Activated naive CD4-positive, alpha-beta T cell treated with anti-CD3 and anti-CD28 coated beads for 36 hours (primary cell): ENCODE measurements at regions of chr3 and their contacts with region 1.

Region 1: DNA sequence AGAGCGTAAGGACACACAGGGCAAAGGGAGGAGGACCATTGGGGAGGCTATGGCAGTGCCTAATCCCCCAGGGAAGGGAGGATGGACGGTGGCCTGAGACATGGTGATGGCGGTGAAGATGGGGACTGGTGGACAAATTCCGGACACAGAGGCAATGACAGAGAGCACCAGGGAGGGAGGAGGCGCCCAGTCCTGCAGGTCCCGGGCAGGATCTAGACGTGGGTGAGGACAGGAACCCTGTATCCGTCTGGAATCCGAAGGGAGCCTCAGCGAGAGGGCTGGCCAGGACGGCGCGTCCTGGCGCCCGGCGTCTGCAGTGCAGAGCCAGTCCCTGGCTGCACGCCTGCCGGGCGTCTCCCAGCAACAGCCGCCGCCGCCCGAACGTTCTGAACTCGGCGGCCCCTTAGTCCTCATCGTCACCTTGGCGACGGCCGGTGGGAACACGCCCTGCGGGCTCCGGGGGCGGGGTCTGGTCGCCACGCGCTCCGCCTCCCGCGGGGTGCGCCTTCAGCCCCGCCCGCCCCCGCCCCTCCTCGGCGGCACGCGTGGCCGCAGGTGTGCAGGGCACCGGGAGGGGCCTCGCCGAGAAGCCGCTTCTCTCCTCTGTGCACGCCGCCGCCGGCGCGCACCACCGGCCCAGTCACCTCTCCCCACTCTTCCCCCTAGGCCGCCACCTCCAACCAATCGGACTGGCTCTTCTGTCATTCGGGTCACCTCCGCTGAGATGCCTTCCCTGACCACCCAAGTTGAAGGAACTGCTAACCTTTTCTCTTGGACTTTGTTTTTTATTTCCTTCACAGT is 11.6 kb downstream of the XIRP1 start:
- DNase-seq: peak; percentile 89
- H3K4me3 Mint-ChIP-seq: peak overlapping the region; percentile 85
- H3K27ac Mint-ChIP-seq: peak overlapping the region; percentile 92
- H3K4me1 Mint-ChIP-seq: peaks cover 46% of the 10 kb centered on the region
- H3K27me3 Mint-ChIP-seq: no peaks in the 10 kb centered on the region

Region 2: DNA sequence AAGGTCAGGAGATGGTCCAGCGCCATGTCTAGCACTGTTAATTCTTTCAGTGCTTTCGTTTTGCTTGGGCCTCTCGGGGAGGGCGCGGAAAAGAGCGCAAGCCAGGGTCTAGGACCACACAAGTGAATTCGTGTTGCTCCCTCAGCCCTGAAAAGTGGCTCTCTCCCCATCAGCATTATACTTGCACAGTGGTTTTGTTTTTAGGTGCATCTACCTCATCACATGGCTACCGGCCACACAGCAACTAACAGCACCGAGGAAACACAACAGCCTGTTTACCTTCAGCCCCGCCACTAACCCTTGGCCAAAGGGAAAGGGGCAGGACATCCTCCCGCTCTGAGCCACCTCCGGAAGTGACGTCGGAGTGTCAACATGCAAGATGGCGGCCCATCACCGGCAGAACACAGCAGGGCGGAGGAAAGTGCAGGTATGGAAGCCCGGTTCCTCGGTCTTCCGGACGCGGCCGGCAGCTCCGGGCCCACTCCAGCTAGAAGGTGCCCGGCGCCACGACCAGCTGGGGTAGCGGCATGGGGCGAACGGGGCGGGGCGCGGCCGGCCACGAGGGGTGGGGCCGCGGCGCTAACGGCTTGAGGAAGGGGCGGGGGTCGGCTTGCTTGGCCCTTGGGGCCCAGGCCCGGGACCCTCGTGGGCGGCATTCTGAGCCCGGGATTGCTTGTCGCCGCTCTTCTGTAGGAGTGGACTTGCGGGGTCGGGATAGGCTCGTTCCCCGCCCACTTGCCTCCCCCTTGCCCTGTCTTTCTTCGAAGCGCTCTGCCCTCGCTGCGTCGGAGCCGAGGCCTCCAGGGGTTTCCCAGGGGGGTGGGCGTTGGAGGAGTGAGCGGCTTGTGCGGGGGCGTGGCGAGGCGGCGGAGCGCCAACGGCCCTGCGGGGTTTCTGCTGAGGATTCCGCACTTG is 128.8 kb before region 1 on chr3 and contains the starts of genes SCN11A and WDR48:
- CTCF ChIA-PET with region 1: no interaction called
- intact Hi-C with region 1: loop called (anchors 1 kb)
- DNase-seq: peak; percentile 97
- H3K4me3 Mint-ChIP-seq: peak within 1 kb of the TSS; percentile 96
- H3K27ac Mint-ChIP-seq: peak within 1 kb of the TSS; percentile 98
- H3K4me1 Mint-ChIP-seq: peaks cover 50% of the 10 kb centered on the region
- H3K27me3 Mint-ChIP-seq: no peaks in the 10 kb centered on the region
- total RNA-seq, gene SCN11A: 0.05 TPM
- total RNA-seq, gene WDR48: 32.3 to 32.9 TPM

Region 3: GRCh38 chr3:39101022-39101689 is 79.6 kb before region 1 on chr3:
- CTCF ChIA-PET with region 1: interaction called, 5 read pairs
- intact Hi-C with region 1: loop called (anchors 1 kb)
- DNase-seq: peak; percentile 63
- H3K4me3 Mint-ChIP-seq: no peak overlapping the region
- H3K27ac Mint-ChIP-seq: no peak overlapping the region
- H3K4me1 Mint-ChIP-seq: peaks cover 28% of the 10 kb centered on the region
- H3K27me3 Mint-ChIP-seq: no peaks in the 10 kb centered on the region

Region 4: DNA sequence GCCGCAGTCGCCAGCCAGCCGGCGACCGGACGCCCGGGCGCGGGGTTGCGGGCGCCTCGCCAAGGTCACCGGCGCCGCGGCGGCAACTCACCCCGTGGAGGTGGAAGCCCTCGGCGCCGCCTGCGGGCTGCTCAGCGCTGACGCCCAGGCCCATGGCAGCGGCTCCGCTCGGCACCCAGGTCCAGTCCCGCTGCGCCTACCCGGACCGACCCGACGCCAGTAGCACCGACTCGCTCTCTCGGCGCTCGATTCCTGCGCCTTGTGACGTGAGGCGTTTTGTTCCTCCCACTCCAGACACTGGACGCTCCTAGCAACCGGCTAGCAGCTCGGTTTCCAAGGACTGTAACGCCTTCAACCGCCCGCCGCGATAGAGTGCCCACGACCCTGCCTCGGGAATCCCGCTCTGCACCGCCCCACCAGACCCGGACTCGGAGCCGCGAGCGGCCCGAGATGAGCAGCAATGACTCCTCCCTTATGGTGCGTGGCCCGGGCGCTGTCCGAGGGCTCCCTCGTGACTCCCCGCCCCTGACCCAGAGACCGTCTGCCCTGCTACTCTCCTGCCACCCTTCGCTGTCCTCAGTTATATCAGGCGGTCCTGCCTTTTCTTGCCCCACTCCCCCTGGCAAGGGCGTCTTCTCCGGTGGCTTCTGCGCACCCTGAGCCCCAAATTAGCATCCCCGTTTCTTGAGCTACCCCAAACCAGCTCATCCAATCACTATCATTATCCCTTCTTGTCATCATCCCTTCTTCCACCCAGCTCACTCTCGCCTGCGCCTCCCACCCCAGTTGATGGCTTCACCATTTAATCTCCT is 73.2 kb before region 1 on chr3 and contains the starts of genes GORASP1 and TTC21A:
- CTCF ChIA-PET with region 1: interaction called, 5 read pairs
- intact Hi-C with region 1: loop called (anchors 1 kb)
- DNase-seq: peak; percentile 79
- H3K4me3 Mint-ChIP-seq: peak within 1 kb of the TSS; percentile 83
- H3K27ac Mint-ChIP-seq: peak within 1 kb of the TSS; percentile 57
- H3K4me1 Mint-ChIP-seq: peaks cover 42% of the 10 kb centered on the region
- H3K27me3 Mint-ChIP-seq: no peaks in the 10 kb centered on the region
- total RNA-seq, gene GORASP1: 19.0 to 21.8 TPM
- total RNA-seq, gene TTC21A: 1.5 to 1.6 TPM

Region 5: DNA sequence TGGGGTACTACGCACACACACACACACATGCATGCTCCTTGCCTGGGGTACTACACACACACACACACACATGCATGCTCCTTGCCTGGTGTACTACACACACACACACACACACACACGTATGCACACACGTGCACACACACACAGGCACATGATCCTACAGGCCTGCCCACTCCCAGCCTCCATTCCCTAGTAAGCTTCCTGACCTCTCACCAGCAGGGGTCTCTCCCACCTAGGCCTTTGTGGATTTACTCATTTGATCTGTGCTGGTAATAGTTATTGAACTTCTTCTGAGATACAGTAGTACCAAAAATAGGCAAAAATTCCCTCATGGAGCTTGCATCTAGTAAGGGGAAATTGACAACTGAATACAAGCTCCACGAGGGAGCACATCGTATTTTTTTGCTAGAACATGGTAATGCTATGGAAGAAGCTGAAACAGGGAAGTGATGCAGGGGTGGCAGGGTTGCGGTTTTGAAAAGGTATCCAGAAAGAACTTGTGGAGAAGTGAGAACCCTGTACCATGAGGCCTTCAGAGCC is 54.1 kb before region 1 on chr3:
- CTCF ChIA-PET with region 1: interaction called, 7 read pairs
- intact Hi-C with region 1: loop called (anchors 1 kb)
- DNase-seq: peak; percentile 80
- H3K4me3 Mint-ChIP-seq: no peak overlapping the region
- H3K27ac Mint-ChIP-seq: no peak overlapping the region
- H3K4me1 Mint-ChIP-seq: peaks cover 18% of the 10 kb centered on the region
- H3K27me3 Mint-ChIP-seq: no peaks in the 10 kb centered on the region

Region 6: DNA sequence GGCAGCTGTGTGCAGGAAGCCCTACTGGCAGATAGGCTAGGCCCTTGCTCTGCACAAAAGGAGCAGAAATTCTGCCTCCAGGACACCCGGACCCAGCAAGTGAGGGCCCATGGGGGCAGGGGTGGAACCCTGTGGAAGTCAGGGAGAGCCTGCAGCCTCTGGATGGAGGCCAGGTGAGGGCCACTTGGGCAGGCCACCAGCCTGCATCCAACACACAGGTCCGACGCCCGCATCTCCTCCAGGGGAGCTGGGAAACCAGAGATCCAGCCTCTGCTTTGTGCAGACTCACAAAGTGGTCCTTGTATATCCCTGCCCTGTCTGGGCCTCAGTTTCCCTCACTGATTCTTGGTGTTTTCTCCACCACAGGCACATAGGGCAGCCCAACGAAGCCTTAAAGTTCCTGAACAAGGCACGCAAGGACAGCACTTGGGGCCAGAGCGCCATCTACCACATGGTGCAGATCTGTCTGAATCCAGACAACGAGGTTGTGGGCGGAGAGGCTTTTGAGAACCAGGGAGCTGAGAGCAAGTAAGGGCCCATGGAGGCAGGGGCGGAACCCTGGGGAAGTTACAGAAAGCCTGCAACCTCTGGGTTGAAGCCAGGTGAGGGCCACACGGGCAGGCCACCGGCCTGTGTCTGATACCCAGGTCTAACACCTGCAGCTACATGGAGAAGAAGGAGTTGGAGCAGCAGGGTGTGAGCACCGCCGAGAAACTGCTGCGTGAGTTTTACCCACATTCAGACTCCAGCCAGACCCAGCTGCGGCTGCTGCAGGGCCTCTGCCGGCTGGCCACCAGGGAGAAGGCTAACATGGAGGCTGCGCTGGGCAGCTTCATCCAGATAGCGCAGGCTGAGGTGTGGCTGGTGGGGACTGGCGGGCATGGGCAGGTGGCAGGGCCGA is 44.0 kb before region 1 on chr3:
- CTCF ChIA-PET with region 1: no interaction called
- intact Hi-C with region 1: no loop called
- DNase-seq: no peak
- H3K4me3 Mint-ChIP-seq: no peak overlapping the region
- H3K27ac Mint-ChIP-seq: no peak overlapping the region
- H3K4me1 Mint-ChIP-seq: peaks cover 20% of the 10 kb centered on the region
- H3K27me3 Mint-ChIP-seq: no peaks in the 10 kb centered on the region

Region 7: DNA sequence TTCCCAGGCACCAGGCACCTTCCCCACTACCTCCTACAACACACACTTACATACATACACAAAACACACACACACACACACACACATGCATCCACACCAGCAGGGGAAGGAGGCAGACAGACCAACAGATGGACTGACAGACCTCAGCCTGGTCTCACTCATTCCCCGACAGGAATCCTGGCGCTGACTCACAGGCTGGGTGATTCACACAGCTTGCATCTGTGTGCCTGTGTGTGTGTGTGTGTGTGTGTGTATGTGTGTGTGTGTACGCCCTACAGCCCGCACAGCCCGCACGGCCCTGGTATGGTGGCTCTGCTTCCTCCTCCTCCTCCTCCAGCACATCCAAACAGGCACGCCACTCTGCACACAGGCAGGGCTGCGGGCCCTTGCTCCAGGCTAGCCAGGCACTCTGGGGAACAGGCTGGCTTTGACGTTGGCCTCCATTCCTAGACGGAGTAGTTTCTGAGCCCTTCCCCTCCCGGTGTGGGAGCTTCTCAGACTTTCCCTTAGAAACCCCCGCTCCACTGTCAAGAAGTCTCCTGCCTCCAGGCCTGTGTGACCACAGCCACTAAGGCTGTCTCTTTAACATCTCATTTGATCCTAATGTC is 33.7 kb before region 1 on chr3:
- CTCF ChIA-PET with region 1: interaction called, 5 read pairs
- intact Hi-C with region 1: loop called (anchors 1 kb)
- DNase-seq: peak; percentile 92
- H3K4me3 Mint-ChIP-seq: peak overlapping the region; percentile 99
- H3K27ac Mint-ChIP-seq: peak overlapping the region; percentile 98
- H3K4me1 Mint-ChIP-seq: peaks cover 70% of the 10 kb centered on the region
- H3K27me3 Mint-ChIP-seq: no peaks in the 10 kb centered on the region

Region 8: DNA sequence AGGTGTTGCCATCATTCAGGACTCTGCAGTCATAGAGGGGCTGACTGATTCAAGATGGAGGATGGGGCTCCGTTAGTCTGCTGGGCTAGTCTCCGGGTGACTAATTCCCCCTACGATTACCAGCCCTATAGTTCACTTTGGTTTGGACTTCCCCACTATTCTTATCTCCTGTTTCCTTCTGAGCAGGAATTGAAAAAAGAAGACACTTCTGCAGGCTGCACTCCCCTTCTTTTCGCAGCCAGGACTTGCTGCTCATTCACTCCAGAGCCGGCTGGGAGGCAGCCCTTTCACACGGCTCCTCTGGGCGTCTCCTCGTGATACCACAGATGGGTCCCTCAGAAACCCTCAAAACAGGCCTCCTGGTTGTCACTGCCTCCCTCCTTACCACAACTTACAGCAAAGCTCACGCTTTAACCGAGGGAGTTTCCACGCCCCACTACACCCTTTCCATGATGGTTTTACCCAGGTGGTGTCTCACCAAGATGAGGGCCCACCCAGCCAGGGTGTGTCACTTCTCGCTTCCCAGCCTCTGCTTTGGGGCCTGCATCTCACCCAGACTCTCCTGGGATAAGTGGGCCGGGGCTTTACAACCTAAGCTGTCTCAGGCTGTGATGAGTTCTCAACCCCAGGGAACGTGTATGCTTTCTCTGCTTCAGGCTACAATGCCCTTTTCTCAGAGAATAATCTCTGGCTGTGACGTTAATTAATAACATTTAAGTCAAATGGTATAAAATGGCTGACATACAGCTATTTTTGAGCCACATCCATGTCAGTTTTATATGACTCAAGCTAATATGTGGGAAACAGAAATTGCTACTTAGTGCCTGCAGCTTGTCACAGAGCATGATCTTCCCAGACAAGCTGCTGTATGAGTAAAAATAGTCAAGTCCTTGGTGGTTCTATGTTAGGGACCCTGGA is 87.1 kb after region 1 on chr3:
- CTCF ChIA-PET with region 1: no interaction called
- intact Hi-C with region 1: loop called (anchors 1 kb)
- DNase-seq: peak; percentile 83
- H3K4me3 Mint-ChIP-seq: peak overlapping the region; percentile 39
- H3K27ac Mint-ChIP-seq: peak overlapping the region; percentile 92
- H3K4me1 Mint-ChIP-seq: peaks cover 25% of the 10 kb centered on the region
- H3K27me3 Mint-ChIP-seq: no peaks in the 10 kb centered on the region

Region 9: DNA sequence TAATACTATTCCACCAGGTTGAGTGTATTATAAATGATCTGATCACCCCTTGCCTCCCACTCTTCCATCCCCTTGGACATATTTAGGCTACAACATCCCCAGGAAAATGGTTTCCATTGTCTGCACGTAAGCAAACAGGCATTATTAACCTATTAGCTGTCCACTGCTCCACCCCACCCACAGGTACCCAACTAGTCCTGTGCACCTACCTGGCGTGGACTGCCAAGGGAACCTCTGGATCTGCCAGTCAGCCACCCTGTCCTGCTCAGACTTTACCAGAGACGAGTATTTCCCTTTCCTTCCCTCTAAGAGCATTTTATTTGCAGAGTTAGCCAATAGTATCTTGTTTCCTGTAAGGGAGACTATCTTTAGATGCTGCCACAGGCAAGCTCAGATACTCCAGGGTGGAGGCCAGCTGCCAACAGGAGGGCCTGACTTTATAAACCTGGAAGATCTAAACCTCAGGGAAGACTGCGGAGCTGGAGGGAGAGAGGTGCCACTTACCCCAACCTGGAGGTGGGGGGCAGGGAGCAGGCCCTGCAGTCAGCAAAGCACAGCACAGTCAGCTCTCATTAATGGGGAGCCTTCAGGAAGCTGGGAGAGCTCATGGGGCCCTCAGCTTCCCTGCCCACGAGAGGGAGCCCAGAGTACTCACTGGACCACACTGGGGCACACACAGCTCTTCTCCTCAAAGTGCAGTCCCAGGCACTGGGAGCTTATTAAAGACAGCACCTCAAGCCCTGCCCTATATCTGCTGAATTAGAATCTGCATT is 99.2 kb after region 1 on chr3 and contains the start of gene CX3CR1:
- CTCF ChIA-PET with region 1: no interaction called
- intact Hi-C with region 1: no loop called
- DNase-seq: no peak
- H3K4me3 Mint-ChIP-seq: no peak within 1 kb of the TSS
- H3K27ac Mint-ChIP-seq: peak within 1 kb of the TSS; percentile 25
- H3K4me1 Mint-ChIP-seq: peaks cover 6% of the 10 kb centered on the region
- H3K27me3 Mint-ChIP-seq: no peaks in the 10 kb centered on the region
- total RNA-seq, gene CX3CR1: not detected